Posterior cingulate gyrus (tissue), 11 donors: ENCODE measurements at regions of chr17 and their contacts with region 1.

Region 1: GRCh38 chr17:3012926-3013581 is 50.4 kb downstream of the OR1D5 start:
- DNase-seq: peak in 8 of 10 donors; percentile 26 to 94 (median 68)

Region 2: DNA sequence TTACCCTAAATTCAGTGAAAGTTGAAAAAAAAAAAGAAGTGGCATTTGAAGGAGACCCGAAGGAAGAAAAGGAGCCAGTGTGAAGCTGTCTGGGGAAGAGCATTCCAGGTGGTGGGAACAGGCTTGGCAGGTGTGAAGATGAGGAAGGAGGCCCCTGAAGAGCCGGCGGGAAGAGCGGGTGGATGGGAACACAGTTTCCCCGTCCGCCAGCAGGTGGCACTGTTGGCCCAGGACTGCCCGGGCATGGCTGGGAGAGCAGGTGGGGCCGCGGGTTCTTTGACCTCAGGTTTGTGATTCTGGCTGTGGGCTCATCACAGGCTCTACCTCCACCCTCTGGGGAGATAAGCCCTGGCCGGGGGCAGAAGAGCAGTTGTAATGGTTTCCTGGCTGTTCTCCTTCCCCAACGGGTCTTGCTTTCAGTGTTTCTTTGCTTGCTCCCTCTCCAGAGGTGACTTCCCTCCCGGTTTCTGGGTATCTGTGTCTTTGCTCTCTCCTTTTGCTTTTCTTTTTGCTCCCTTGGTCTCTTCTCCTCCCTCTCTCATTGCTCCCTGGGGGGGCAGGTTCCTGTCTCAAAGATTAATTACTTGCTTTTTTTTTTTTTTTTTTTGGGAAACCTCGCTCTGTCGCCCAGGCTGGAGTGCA is 184.5 kb before region 1 on chr17:
- intact Hi-C with region 1: loop called (anchors 1 kb)
- DNase-seq: peak; percentile 50 to 95 (median 76)

Region 3: DNA sequence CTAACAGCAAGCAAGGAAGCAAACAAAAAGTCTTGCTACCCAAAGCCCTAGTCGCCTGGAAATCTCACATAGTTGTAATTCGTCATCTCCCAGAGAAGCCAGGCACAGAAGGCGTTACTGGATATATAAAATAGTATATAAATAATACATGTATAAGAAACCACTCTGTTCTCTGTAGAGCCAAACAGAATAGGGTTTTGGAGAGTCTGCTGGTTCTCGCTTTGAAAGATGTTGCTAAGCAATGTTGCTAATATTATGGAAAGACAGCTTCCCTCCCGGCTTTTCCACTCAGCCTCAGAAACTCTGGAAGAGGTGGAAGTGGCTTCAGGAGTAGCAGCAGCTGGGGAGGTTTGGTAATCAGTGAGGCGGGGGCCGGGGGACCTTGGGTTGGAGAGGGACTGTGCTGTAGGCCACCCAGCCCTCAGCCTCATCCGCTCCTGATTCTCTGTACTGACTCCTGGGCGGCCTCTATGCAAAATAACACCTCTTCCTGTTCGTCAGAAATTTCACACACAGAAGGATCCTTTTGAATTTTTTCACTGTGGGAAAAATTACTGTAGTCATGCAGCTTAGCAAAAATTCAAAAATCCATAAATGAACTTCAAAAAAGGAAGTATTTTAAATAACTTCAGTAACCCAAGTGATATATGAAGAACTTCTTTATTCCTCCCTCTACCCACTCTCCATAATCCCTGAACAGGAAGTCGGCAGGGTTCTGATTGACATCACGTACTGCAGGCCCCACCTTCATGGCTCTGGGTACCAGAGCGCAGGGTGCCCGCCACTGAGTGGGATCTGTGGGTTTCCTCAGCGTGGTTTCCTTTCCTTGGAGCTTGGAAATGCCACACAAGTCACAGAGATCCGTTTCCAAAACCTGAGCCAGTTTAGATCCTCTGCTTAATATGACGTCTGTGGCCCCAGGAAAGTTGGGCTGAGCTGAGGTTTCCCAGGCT is 165.4 kb before region 1 on chr17:
- intact Hi-C with region 1: loop called (anchors 2 kb)
- DNase-seq: no peak

Region 4: GRCh38 chr17:2924211-2924610 is 88.8 kb before region 1 on chr17:
- intact Hi-C with region 1: no loop called
- DNase-seq: no peak